ENCODE measurements at regions of chr4 and their contacts with region 1.

Region 1: DNA sequence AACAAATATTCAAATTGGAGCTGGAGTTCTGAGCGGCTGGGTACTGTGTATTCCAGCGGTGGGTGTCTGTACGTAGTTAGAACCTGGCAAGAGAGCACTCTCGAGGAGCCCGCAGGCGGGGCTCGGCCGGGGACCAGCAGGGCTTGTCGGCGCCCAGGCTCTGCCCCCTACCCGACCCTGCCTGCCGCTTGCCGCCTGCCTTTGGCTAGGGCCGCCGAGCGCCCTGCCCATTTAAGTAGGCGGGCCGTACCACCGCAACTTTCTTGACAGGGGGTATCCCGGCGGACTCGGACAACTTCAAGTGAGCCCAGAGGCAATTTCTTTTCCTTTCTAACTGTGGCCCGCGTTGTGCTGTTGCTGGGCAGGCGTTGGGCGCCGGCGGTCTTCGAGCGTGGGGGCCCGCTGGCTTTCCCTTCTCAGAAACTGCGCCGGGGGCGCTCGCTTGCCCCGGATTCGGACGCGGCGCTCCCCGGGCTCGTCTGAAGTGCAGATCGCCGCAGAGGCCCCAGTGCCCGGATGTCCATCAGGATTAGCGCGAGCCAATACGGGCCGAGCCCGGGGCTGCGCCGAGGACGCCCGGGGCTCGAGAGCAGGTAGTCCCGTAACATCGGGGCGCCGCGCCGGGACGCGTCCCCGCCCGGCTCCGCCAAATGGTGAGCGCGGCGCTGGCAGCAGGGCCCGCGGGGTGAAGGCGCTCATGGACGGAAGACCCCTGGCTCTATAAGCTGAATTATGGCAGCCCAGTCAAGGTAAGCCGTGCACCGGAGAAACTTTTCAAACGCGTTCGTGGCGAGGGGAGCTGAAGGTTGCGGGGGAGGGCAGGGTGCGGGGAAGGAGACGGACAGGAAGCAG is 72.1 kb downstream of the AFF1 start:
- DNase-seq: peak; percentile 89
- H3K4me3 Mint-ChIP-seq: peak overlapping the region; percentile 88
- H3K27ac Mint-ChIP-seq: peak overlapping the region; percentile 99
- H3K4me1 Mint-ChIP-seq: peaks cover 57% of the 10 kb centered on the region
- H3K27me3 Mint-ChIP-seq: no peaks in the 10 kb centered on the region

Region 2: GRCh38 chr4:86934771-86935565 is 71.9 kb before region 1 on chr4 and contains the start of gene AFF1:
- CTCF ChIA-PET with region 1: interaction called, 5 read pairs
- POLR2A ChIA-PET with region 1: interaction called, 37 read pairs
- DNase-seq: peak; percentile 88
- H3K4me3 Mint-ChIP-seq: peak within 1 kb of the TSS; percentile 83
- H3K27ac Mint-ChIP-seq: peak within 1 kb of the TSS; percentile 94
- H3K4me1 Mint-ChIP-seq: peaks cover 46% of the 10 kb centered on the region
- H3K27me3 Mint-ChIP-seq: no peaks in the 10 kb centered on the region
- total RNA-seq, gene AFF1: 71.4 to 74.5 TPM

Region 3: DNA sequence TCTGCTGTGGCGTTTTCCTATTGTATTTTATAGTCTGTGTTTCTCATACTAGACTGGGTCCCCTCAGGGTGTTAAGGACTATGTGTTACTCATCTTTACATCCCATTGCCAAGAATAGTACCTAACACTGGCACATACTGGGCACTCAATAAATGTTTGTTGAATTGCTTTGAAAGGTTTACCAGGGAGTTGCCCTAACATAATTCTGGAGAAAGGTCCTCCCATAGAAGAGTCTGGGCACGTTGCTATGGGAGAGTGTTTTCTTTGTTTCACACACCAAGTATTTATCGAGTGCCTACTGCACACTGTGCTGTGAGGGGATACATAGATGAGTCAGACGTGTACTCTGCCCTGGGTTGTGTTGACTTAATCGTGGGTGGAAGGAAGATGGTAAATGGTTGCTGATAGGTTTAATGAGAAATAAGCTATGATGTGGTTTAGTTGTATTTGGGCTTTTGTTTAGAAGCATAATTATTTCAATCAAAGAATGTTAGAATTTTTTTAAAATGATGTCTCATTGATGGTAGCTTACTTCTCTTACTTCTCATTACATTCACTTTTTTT is 29.2 kb before region 1 on chr4:
- CTCF ChIA-PET with region 1: no interaction called
- POLR2A ChIA-PET with region 1: no interaction called
- DNase-seq: peak; percentile 22
- H3K4me3 Mint-ChIP-seq: no peak overlapping the region
- H3K27ac Mint-ChIP-seq: peak overlapping the region; percentile 26
- H3K4me1 Mint-ChIP-seq: peaks cover 58% of the 10 kb centered on the region
- H3K27me3 Mint-ChIP-seq: no peaks in the 10 kb centered on the region

Region 4: GRCh38 chr4:87073199-87074120 is 66.6 kb after region 1 on chr4:
- CTCF ChIA-PET with region 1: no interaction called
- POLR2A ChIA-PET with region 1: no interaction called
- DNase-seq: peak; percentile 68
- H3K4me3 Mint-ChIP-seq: peak overlapping the region; percentile 68
- H3K27ac Mint-ChIP-seq: peak overlapping the region; percentile 86
- H3K4me1 Mint-ChIP-seq: peaks cover 41% of the 10 kb centered on the region
- H3K27me3 Mint-ChIP-seq: no peaks in the 10 kb centered on the region

Region 5: GRCh38 chr4:87353592-87353991 is 346.7 kb after region 1 on chr4:
- CTCF ChIA-PET with region 1: no interaction called
- POLR2A ChIA-PET with region 1: no interaction called
- DNase-seq: peak; percentile 65
- H3K4me3 Mint-ChIP-seq: no peak overlapping the region
- H3K27ac Mint-ChIP-seq: no peak overlapping the region
- H3K4me1 Mint-ChIP-seq: peaks cover 8% of the 10 kb centered on the region
- H3K27me3 Mint-ChIP-seq: no peaks in the 10 kb centered on the region

Measured in activated CD4-positive, alpha-beta T cell treated with anti-CD3 and anti-CD28 coated beads, Interleukin-2, amount 10 ng/mL, durations not matched to agents 7 days and 5 days (primary cell).